Sciatic nerve (tissue), 2 donors: ENCODE measurements at regions of chr11 and their contacts with region 1.

Region 1: GRCh38 chr11:44621140-44621681 is 55.7 kb downstream of the CD82 start:
- DNase-seq: peak; percentile 86
- ATAC-seq: peak; percentile 85

Region 2: DNA sequence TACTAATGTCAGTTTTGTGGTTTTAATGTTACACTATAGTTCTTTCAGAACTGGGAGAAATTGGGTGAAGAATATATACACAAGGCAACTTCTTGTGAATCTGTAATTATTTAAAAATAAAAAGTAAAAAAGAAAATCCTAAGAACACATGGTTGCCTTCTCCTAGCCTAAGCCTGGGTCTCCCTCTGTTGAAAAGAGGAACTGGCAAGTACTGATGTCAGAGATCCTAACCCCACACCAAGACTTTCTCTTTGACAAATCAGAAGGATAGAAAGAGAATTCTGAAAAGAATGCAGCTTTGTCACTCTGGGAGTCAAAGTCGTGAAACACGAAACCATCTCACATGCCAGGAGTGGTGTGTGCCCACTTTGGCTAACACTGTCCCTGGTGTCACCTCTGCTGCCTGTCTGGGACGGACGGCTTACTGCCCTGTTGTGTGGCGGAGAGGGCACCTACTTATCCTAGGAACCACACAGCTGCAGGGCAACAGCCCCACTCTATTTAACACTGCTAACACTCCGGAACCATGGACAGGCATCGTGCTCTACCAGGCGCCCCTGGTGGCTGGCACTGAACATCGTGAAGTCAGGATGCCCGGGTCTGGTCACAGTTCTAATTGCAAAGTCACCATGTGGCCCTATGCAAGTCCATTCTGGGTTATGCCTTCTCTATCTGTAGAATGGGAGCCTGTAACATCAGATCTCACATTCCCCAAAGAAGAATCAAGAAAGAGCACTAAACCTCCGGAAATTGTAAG is 164.5 kb before region 1 on chr11:
- intact Hi-C with region 1: no loop called
- DNase-seq: no peak
- ATAC-seq: no peak

Region 3: GRCh38 chr11:44579302-44579761 is 41.9 kb before region 1 on chr11:
- intact Hi-C with region 1: no loop called
- DNase-seq: no peak
- ATAC-seq: no peak

Region 4: DNA sequence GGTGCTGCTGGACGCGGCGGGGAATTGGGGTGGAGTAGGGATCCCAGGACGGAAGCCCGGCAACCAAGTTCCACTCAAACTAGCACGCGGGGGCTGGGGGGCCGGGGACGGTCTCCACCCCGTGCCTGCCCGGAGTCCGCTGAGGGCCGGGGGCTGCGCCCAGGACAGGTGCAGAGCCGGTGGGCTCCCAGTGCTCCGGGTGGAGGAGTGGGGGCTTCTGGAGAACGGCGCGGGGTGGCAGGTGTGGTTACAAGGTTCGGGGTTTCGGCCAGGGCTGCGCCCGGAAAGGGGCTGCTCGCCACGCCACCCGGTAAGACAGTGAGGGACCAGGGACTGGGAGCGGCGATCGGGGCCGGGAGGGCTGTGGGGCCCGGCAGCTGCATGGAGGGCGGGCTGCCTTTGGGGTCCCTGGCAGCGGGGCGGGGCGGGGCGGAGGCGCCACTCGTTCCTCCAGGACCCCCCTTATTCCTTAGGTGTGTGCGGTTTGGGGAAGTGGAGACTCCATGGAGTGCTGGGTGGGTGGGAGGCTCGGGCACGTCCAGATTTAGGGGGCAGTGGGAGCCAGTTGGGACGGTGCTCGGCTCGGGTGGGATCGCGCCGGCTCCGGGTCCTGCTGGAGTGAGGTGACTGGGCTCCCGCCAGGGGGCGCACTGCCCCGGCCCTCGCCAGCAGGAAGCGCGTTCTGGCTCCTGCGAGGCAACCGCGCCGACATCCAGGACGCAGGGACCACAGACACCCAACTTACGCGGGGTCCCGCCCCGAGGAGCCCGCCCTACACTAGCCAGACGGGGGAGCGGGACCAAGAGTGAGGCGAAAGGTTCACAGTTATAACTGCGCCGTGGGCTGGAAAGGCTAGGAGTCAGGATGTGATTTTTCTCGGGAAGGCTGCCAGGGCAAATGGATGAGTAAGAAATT is 106.4 kb after region 1 on chr11:
- intact Hi-C with region 1: loop called (anchors 10 kb)
- DNase-seq: peak; percentile 90
- ATAC-seq: peak; percentile 93

Region 5: GRCh38 chr11:44893846-44894617 is 272.8 kb after region 1 on chr11:
- intact Hi-C with region 1: loop called (anchors 5 kb)
- DNase-seq: peak; percentile 84
- ATAC-seq: peak; percentile 94

Region 6: GRCh38 chr11:44911029-44911814 is 290.0 kb after region 1 on chr11:
- intact Hi-C with region 1: loop called (anchors 5 kb)
- DNase-seq: peak; percentile 95
- ATAC-seq: peak; percentile 90

Region 7: DNA sequence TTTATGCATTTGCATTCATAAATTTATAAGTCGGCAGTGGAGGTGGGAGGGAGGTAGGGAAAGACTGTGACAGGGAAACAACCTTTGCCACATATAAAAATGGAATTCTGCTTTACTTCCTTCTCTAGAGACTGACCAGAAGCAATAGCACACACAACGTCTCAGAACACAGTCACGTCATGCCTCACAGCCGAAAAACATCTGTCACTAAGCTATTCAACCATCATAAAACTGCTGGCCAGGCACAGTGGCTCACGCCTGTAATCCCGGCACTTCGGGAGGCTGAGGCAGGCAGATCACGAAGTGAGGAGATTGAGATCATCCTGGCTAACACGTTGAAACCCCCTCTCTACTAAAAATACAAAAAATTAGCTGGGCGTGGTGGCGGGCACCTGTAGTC is 1871.3 kb after region 1 on chr11:
- intact Hi-C with region 1: no loop called
- DNase-seq: no peak
- ATAC-seq: no peak